ENCODE measurements at regions of chr22 and their contacts with region 1.

Region 1: GRCh38 chr22:48483764-48484528 is 1343.7 kb downstream of the BRD1 start:
- DNase-seq: peak in 1 of 2 donors; percentile 15
- H3K4me3 ChIP-seq: no peak overlapping the region
- H3K27ac ChIP-seq: no peak overlapping the region
- H3K4me1 ChIP-seq: no peaks in the 10 kb centered on the region
- H3K27me3 ChIP-seq: peaks cover 0 to 36% of the 10 kb centered on the region in 2 donors
- CTCF ChIP-seq: no peak
- POLR2A ChIP-seq: no peak

Region 2: DNA sequence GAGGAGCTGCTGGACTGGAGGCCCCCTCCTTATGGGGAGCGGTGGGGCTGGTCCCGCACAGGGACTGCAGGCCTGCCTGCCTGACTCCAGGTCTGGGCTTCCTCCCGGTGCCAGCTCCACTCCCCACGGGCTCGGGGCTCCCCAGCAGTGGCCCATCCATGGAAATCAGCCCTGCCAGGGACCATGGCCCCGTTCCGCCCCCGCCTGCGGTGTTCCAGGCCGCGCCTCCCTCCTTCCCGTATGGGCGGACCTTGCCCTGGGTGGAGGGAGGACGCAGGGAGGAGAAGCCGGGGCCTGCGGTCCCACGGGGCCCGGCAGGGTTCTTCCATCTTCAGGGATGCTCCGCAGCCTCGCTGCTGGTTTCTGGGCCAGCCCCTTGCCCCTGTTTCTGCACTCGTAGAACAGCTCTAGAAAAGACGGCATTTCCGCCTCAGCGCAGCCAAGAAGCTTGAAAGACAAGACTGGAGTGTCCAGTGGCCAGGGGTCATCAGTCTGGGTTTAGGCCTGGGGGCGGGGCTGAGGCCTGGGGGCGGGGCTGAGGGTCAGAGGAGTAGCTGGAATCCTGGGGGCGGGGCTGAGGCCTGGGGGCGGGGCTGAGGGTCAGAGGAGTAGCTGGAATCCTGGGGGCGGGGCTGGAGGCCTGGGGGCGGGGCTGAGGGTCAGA is 13.2 kb after region 1 on chr22:
- intact Hi-C with region 1: loop called (anchors 1 kb)
- DNase-seq: no peak
- H3K4me3 ChIP-seq: no peak overlapping the region
- H3K27ac ChIP-seq: no peak overlapping the region
- H3K4me1 ChIP-seq: no peaks in the 10 kb centered on the region
- H3K27me3 ChIP-seq: peaks cover 0 to 36% of the 10 kb centered on the region in 2 donors
- CTCF ChIP-seq: no peak
- POLR2A ChIP-seq: no peak

Measured in breast epithelium (tissue), 4 donors.